ENCODE measurements at regions of chr12 and their contacts with region 1.

Region 1: GRCh38 chr12:118016424-118017264 is at the start of gene RFC5:
- DNase-seq: peak; percentile 94 to 96
- ATAC-seq: peak; percentile 96 to 98
- H3K4me3 ChIP-seq: peak within 1 kb of the TSS; percentile 81 to 97 (median 92)
- H3K27ac ChIP-seq: peak within 1 kb of the TSS; percentile 49 to 73 (median 60)
- H3K4me1 ChIP-seq: peaks cover 11 to 12% of the 10 kb centered on the region in 2 donors
- H3K27me3 ChIP-seq: no peaks in the 10 kb centered on the region
- CTCF ChIP-seq: no peak
- POLR2A ChIP-seq: no peak
- total RNA-seq, gene RFC5: 3.5 to 9.9 (median 5.4) TPM

Region 2: GRCh38 chr12:118052324-118053070 is 35.9 kb after region 1 on chr12:
- in situ Hi-C with region 1: no loop called
- intact Hi-C with region 1: loop called (anchors 2 kb)
- DNase-seq: peak; percentile 76 to 95
- ATAC-seq: peak; percentile 99 to 100
- H3K4me3 ChIP-seq: peak overlapping the region in 3 of 4 donors; percentile 8 to 11 (median 10)
- H3K27ac ChIP-seq: peak overlapping the region; percentile 67 to 82 (median 80)
- H3K4me1 ChIP-seq: peaks cover 44 to 54% of the 10 kb centered on the region in 2 donors
- H3K27me3 ChIP-seq: no peaks in the 10 kb centered on the region
- CTCF ChIP-seq: no peak
- POLR2A ChIP-seq: no peak

Region 3: DNA sequence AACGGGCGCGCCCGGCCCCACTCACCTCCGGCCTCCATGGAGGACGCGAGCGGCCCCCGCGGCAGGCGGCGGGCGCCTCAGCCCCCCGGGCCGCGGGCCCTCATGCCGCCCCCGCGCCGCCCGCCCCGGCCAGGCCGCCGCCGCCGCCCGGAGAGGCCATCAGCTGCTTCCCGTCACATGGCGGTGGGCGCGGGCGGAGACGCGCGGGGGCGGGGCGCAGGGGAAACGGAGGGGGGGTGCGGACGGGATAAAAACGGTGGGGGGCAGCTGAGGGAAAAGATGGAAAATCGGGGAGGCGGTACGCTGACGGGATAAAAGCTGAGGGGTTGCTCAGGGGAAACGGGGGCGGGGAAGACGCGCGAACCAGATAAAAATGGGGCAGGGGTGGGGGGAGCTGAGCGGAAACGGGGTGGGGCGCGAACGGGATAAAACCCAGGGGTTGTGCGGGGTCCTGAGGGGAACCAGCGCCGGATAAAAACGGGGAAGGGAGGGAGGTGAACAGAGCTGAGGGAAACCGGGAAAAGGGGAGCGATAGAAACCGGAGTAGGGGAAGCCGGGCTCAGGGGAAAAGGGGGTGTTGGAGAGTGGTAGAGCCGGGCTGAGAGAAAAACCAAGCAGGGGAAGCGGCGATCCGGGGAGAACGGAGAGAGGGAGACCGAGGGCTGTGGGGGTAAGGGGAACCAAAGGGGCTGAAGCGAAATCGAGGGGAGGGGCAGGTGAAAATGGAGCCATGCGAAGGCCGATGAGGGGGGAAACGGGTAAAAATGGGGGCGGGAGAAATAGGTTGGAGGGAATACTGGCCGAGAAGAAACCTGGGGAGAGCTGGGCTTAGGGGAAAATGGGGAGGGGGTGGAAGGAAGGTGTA is 44.6 kb after region 1 on chr12 and contains the start of gene WSB2:
- in situ Hi-C with region 1: no loop called
- intact Hi-C with region 1: loop called (anchors 2 kb)
- DNase-seq: peak; percentile 58 to 67
- ATAC-seq: peak; percentile 65 to 66
- H3K4me3 ChIP-seq: peak within 1 kb of the TSS; percentile 82 to 94 (median 87)
- H3K27ac ChIP-seq: peak within 1 kb of the TSS; percentile 92 to 96 (median 96)
- H3K4me1 ChIP-seq: peaks cover 23 to 30% of the 10 kb centered on the region in 2 donors
- H3K27me3 ChIP-seq: no peaks in the 10 kb centered on the region
- CTCF ChIP-seq: no peak
- POLR2A ChIP-seq: peak; percentile 30 to 45
- total RNA-seq, gene WSB2: 83.5 to 133 (median 93.5) TPM

Region 4: DNA sequence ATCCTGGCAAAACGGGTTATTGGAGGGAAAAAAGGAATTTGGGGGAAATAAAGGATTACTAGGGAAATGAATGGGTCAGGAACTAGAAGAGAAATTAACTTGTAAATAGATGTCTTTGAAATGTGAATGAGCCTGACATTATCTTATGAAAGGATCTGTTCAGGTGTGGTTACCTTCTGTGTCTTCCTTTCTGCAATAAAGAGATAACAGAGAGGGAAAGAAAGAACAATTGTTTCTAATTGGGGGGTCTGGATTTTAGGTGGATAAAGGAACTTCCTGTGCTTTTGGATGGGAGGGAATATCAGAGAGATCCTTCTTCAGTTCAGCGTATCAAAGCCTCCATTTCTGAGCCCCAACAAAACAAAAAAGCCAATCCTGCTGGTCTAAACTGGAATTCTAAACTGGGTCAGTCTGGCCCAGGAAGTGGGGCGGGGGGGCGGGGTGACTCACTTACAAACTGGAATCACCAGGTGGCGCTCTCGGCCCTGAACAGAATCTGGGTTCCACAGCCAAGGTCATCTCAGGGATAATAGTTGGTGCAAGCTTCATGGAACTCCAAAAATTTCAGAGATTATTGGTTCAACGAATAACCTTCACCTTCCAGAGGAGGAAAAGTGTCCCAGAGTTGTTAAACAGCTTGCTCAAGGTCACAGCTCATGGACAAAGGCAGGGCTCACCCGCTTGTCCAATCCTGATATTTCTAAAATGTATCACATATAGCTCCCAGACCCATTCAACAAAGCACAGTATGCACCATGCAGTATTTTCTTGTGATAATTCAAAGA is 104.1 kb after region 1 on chr12:
- in situ Hi-C with region 1: no loop called
- intact Hi-C with region 1: no loop called
- DNase-seq: peak; percentile 48 to 67
- ATAC-seq: peak; percentile 77 to 91
- H3K4me3 ChIP-seq: no peak overlapping the region
- H3K27ac ChIP-seq: peak overlapping the region; percentile 16 to 54 (median 38)
- H3K4me1 ChIP-seq: peaks cover 0 to 9% of the 10 kb centered on the region in 2 donors
- H3K27me3 ChIP-seq: no peaks in the 10 kb centered on the region
- CTCF ChIP-seq: peak; percentile 38 to 83 (median 45)
- POLR2A ChIP-seq: no peak

Measured in gastrocnemius medialis (tissue), 4 donors.